ENCODE measurements at regions of chr5 and their contacts with region 1.

Region 1: GRCh38 chr5:81751009-81751835 is at the start of gene SSBP2:
- DNase-seq: peak; percentile 87 to 99
- H3K4me3 ChIP-seq: peak within 1 kb of the TSS; percentile 79
- H3K27ac ChIP-seq: peak within 1 kb of the TSS; percentile 86
- H3K4me1 ChIP-seq: peaks cover 29% of the 10 kb centered on the region
- H3K27me3 ChIP-seq: no peaks in the 10 kb centered on the region
- CTCF ChIP-seq: no peak
- total RNA-seq, gene SSBP2: 3.5 and 6.4 TPM in 2 replicates

Region 2: GRCh38 chr5:81506900-81507588 is 244.2 kb before region 1 on chr5:
- CTCF ChIA-PET with region 1: interaction called, 17 read pairs
- POLR2A ChIA-PET with region 1: no interaction called
- intact Hi-C with region 1: loop called (anchors 1 kb)
- DNase-seq: peak; percentile 25 to 67
- H3K4me3 ChIP-seq: no peak overlapping the region
- H3K27ac ChIP-seq: no peak overlapping the region
- H3K4me1 ChIP-seq: no peaks in the 10 kb centered on the region
- H3K27me3 ChIP-seq: no peaks in the 10 kb centered on the region
- CTCF ChIP-seq: peak; percentile 85

Region 3: DNA sequence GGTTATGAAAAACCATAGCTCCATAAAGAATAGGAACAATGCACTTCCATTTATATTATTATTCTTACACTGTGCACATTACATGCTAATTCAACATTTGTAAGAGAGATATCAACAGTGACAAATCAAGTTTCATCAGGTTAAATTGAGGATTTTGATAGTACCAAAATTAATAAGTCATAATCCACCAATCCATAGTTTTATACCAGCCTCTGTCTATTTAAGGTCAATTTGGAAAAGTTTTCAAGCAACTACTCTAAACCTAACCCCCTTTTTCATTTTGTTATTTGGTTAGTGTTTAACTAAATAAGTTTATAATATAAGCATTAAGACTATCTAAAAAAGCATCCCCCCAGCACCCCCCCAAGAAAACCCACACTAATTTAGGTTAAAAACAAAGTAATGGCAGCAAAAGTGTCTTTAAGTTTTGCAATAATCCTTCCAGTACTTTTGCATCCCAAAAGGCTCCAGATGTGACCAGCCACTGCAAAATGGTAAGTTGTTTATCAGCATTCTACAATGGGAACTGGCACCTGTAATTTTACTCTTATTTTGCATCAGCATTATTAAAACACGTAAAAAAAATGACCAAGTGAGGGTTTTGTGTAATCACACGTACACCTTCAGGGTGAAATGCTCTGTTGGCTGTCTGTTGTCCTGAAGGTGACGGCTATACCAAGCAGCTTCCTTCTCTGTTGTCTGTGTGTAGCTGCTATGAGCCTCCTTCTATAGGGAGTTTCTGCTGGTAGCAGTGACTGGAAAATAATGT is 36.4 kb after region 1 on chr5:
- CTCF ChIA-PET with region 1: no interaction called
- POLR2A ChIA-PET with region 1: no interaction called
- intact Hi-C with region 1: loop called (anchors 1 kb)
- DNase-seq: peak; percentile 43 to 83
- H3K4me3 ChIP-seq: no peak overlapping the region
- H3K27ac ChIP-seq: peak overlapping the region; percentile 81
- H3K4me1 ChIP-seq: peaks cover 24% of the 10 kb centered on the region
- H3K27me3 ChIP-seq: no peaks in the 10 kb centered on the region
- CTCF ChIP-seq: no peak

Region 4: DNA sequence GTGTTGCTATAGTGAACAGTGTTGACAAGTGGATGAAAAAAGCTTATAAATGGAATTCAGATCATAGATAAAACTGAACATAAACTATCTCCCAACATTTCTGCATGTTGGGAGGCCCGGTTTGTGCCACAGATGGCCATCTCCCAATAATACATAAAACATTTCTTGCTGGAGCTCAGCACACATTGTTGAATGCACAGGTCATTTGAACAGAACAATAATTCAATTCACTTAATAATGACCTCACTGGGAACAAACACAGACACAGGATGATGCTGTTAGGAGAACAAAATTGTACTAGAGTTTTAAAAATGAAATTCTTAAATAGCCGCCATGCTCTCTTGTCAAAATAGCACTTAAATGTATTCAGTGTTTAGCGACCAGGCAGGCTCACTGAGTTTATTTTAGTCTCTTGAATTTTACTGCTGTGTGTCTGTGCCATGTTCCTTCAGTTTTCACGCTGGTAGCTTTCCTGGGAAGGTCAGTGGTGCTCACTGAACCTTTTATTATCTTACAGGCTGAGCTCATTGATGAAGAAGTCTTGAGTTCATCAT is 84.7 kb after region 1 on chr5:
- CTCF ChIA-PET with region 1: interaction called, 5 read pairs
- POLR2A ChIA-PET with region 1: interaction called, 23 read pairs
- intact Hi-C with region 1: no loop called
- DNase-seq: no peak
- H3K4me3 ChIP-seq: no peak overlapping the region
- H3K27ac ChIP-seq: no peak overlapping the region
- H3K4me1 ChIP-seq: no peaks in the 10 kb centered on the region
- H3K27me3 ChIP-seq: no peaks in the 10 kb centered on the region
- CTCF ChIP-seq: no peak

Region 5: DNA sequence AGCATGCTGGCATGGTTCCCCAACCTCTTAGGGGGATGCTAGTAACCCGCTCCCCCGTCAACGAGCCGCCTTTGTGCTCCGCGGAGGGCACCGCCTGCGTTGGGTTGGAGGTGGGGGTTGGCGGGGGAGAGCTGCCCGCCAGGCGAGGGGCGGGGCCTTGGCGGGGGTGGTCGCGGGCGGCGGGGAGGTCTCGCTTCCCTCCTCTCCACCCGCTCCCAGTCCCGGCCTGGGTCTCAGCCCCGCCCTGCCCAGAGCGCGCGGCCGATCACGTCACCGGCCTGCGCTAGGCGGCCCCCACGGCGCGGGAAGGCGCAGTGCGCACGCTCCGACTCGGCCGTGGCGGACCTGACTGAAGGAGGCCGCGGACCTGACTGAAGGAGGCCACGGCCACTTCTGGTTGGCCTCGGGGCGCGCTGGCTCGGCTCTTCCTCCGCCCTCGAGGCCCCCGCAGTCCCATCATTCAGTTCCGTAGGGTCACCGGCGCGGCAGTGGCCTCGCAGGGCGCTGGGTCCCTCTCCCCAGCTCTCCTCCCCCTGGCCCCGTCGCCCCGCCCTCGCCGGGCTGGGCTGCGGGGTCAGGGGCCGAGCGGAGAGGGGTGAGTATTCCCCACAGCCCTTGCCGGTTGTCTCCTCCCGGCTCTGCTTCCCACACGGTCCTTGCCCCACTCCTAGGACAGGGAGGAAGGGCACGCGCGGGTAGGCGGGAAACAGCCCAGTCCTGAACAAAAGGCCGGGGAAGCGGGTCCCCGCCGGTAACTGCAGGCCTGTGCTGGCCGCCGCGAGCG is 220.7 kb after region 1 on chr5 and contains the start of gene ATG10:
- CTCF ChIA-PET with region 1: no interaction called
- POLR2A ChIA-PET with region 1: no interaction called
- intact Hi-C with region 1: loop called (anchors 1 kb)
- DNase-seq: peak; percentile 66 to 91
- H3K4me3 ChIP-seq: peak within 1 kb of the TSS; percentile 64
- H3K27ac ChIP-seq: peak within 1 kb of the TSS; percentile 87
- H3K4me1 ChIP-seq: peaks cover 15% of the 10 kb centered on the region
- H3K27me3 ChIP-seq: no peaks in the 10 kb centered on the region
- CTCF ChIP-seq: no peak
- total RNA-seq, gene ATG10: 12.7 and 15.7 TPM in 2 replicates

Region 6: DNA sequence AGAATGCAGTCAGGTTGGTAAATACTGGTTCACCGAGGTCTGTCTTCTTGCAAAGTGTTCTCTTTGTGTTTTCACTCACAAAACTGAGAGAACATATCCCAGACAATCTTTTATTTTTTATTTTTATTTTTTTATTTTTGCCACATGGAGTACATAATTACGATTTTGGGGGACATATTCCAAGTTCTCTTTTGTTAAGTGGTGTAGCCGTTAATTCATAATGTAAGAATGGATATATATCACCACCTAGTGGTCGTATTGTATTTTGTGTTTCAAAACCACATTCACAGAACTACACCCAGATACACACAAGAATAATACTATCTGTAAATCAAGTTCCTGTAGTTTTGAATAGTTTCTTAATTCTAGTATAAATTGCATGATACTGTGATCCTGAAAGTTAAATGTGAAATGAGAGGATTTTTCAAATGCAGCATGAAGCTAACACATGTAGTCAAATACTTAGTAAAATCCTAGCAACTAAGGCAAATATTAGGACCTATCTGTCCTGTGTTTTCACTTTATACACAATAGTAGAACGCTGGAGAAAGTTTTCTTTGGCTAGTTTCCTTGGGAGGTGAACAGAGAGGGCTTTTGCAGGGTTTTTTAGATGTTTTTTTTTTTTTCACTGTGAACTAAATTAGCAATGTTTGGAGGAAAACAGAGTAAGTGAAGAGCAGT is 1813.0 kb after region 1 on chr5:
- CTCF ChIA-PET with region 1: no interaction called
- POLR2A ChIA-PET with region 1: no interaction called
- intact Hi-C with region 1: loop called (anchors 10 kb)
- DNase-seq: peak in 1 of 2 experiments; percentile 35
- H3K4me3 ChIP-seq: no peak overlapping the region
- H3K27ac ChIP-seq: peak overlapping the region; percentile 49
- H3K4me1 ChIP-seq: peaks cover 16% of the 10 kb centered on the region
- H3K27me3 ChIP-seq: peaks cover 8% of the 10 kb centered on the region; the same call in 1 of the 2 replicates
- CTCF ChIP-seq: peak; percentile 82

Measured in PC-9 (cell line).